AG04449 (cell line): ENCODE measurements at regions of chr7 and their contacts with region 1.

Region 1: GRCh38 chr7:139737221-139738100 is 40.3 kb downstream of the HIPK2 start:
- DNase-seq: no peak
- H3K4me3 ChIP-seq: no peak overlapping the region
- CTCF ChIP-seq: no peak

Region 2: DNA sequence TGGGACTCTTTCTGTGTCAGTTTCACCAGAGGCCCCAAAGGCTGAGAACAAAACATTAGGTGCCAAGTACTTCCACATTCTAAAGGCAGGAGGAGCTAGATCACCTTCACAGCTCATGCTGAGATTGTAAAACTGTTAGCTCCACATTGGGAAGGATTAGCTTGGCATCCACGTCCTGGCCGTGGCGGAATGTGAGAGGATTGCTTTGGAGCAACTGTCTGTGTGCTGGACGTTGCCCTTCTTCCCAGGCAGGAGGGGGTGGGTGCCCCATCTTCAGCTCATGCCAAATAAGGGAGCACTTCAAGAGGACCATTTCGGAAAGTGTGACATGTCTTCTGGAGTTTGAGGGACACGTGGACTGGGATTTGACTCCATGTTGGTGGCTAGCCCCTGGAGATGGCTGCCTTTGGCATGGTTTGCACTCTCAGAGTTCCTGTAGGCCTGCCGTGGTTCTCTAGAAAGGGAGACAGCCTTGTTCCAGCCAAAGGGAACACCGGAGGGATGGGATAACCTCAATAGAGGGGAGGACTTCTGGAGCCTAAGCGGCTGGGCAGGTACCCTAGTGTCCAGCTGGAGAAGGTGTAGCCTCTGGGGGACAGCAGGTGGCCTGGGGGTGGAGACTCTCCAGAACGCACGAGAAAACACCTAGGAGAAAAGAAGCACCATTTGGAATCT is 416.3 kb before region 1 on chr7:
- CTCF ChIA-PET with region 1: no interaction called
- POLR2A ChIA-PET with region 1: no interaction called
- DNase-seq: no peak
- H3K4me3 ChIP-seq: no peak overlapping the region
- CTCF ChIP-seq: peak; percentile 35

Region 3: GRCh38 chr7:139714163-139714901 is 23.1 kb before region 1 on chr7:
- CTCF ChIA-PET with region 1: no interaction called
- POLR2A ChIA-PET with region 1: no interaction called
- DNase-seq: no peak
- H3K4me3 ChIP-seq: no peak overlapping the region
- CTCF ChIP-seq: no peak

Region 4: GRCh38 chr7:139753081-139753692 is 15.7 kb after region 1 on chr7:
- CTCF ChIA-PET with region 1: interaction called, 15 read pairs
- POLR2A ChIA-PET with region 1: no interaction called
- DNase-seq: no peak
- H3K4me3 ChIP-seq: no peak overlapping the region
- CTCF ChIP-seq: no peak

Region 5: GRCh38 chr7:139916717-139917395 is 179.4 kb after region 1 on chr7:
- CTCF ChIA-PET with region 1: no interaction called
- POLR2A ChIA-PET with region 1: no interaction called
- DNase-seq: no peak
- H3K4me3 ChIP-seq: no peak overlapping the region
- CTCF ChIP-seq: no peak

Region 6: GRCh38 chr7:140192620-140193019 is 455.2 kb after region 1 on chr7:
- CTCF ChIA-PET with region 1: no interaction called
- POLR2A ChIA-PET with region 1: no interaction called
- DNase-seq: no peak
- H3K4me3 ChIP-seq: no peak overlapping the region
- CTCF ChIP-seq: no peak